ENCODE measurements at regions of chrX and their contacts with region 1.

Region 1: DNA sequence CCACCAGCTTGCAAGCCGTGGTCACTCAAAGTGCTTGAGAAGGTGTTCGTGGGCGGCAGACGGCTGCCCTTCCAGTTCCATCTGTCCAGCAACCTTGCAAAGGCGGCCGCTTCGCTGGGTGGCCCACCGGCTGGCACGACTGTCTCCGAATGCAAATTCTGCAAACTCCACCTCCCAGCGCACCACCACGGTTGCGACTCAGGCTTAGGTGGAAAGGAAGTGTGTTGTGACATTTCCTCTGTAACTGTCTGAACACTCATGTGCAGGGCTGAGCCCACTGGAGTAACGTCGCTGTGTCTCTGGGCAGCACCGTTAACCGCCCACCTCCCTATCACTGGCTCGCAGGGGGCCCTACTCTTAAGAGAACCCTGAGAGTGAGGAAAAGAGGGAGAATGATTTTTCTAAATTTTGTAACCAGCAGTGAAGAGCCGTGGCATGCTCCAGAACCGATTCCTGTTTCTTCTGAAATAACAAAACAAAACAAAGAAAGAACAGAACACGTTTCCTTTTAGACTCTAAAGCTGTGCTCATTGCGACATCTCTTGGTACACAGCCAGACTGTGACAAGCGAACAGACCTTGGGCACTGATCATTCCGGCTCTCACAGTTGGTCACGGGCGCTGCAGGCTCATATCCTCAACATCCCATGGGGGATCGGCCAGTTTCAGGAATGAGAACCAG is at the start of gene P2RY8:
- DNase-seq: peak; percentile 93
- H3K4me3 Mint-ChIP-seq: peak within 1 kb of the TSS; percentile 88
- H3K27ac Mint-ChIP-seq: peak within 1 kb of the TSS; percentile 98
- H3K4me1 Mint-ChIP-seq: peaks cover 15% of the 10 kb centered on the region
- H3K27me3 Mint-ChIP-seq: no peaks in the 10 kb centered on the region
- total RNA-seq, gene P2RY8: 19.1 and 19.5 TPM in 2 replicates

Region 2: GRCh38 chrX:1178580-1179057 is 358.6 kb before region 1 on chrX:
- intact Hi-C with region 1: no loop called
- DNase-seq: peak; percentile 71
- H3K4me3 Mint-ChIP-seq: no peak overlapping the region
- H3K27ac Mint-ChIP-seq: no peak overlapping the region
- H3K4me1 Mint-ChIP-seq: no peaks in the 10 kb centered on the region
- H3K27me3 Mint-ChIP-seq: no peaks in the 10 kb centered on the region

Region 3: GRCh38 chrX:1391707-1392375 is 145.3 kb before region 1 on chrX and contains the start of gene SLC25A6:
- intact Hi-C with region 1: loop called (anchors 10 kb)
- DNase-seq: peak; percentile 100
- H3K4me3 Mint-ChIP-seq: peak within 1 kb of the TSS; percentile 97
- H3K27ac Mint-ChIP-seq: peak within 1 kb of the TSS; percentile 98
- H3K4me1 Mint-ChIP-seq: peaks cover 36% of the 10 kb centered on the region
- H3K27me3 Mint-ChIP-seq: no peaks in the 10 kb centered on the region
- total RNA-seq, gene SLC25A6: 302 and 306 TPM in 2 replicates

Region 4: DNA sequence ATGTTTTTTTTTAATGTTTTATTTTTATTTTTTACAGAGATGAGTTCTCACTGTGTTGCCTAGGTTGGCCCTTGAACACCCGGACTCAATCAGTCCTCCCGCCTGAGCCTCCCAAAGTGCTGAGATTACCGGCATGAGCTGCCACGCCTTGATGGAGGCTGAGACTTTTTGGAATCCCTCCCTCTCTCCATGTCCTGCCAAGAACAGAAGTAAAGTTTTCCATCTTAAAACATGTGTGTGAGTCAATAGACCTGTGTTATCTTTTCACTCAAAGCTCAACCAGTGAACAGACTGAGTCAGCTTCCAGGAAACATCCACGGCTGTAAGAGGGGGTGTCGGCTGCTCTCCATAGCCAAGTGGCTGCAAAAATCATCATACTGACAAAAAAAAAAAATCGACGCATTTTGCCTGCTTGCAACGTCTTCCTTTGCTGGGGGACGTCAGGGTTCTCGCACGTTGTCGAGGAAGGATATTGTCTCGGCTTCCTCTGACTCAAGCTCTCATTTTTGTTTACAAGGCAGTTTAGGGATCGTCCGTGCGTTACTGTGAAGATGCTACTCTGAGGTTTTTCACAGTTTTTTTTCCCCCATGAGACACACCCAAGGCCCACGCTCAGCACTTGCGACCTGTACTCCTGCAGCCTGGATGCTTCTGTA is 74.5 kb before region 1 on chrX:
- intact Hi-C with region 1: loop called (anchors 1 kb)
- DNase-seq: peak; percentile 93
- H3K4me3 Mint-ChIP-seq: peak overlapping the region; percentile 83
- H3K27ac Mint-ChIP-seq: peak overlapping the region; percentile 87
- H3K4me1 Mint-ChIP-seq: peaks cover 47% of the 10 kb centered on the region
- H3K27me3 Mint-ChIP-seq: no peaks in the 10 kb centered on the region

Region 5: GRCh38 chrX:1481636-1482529 is 55.3 kb before region 1 on chrX:
- intact Hi-C with region 1: loop called (anchors 1 kb)
- DNase-seq: peak; percentile 94
- H3K4me3 Mint-ChIP-seq: peak overlapping the region; percentile 94
- H3K27ac Mint-ChIP-seq: peak overlapping the region; percentile 99
- H3K4me1 Mint-ChIP-seq: peaks cover 63% of the 10 kb centered on the region
- H3K27me3 Mint-ChIP-seq: no peaks in the 10 kb centered on the region

Region 6: DNA sequence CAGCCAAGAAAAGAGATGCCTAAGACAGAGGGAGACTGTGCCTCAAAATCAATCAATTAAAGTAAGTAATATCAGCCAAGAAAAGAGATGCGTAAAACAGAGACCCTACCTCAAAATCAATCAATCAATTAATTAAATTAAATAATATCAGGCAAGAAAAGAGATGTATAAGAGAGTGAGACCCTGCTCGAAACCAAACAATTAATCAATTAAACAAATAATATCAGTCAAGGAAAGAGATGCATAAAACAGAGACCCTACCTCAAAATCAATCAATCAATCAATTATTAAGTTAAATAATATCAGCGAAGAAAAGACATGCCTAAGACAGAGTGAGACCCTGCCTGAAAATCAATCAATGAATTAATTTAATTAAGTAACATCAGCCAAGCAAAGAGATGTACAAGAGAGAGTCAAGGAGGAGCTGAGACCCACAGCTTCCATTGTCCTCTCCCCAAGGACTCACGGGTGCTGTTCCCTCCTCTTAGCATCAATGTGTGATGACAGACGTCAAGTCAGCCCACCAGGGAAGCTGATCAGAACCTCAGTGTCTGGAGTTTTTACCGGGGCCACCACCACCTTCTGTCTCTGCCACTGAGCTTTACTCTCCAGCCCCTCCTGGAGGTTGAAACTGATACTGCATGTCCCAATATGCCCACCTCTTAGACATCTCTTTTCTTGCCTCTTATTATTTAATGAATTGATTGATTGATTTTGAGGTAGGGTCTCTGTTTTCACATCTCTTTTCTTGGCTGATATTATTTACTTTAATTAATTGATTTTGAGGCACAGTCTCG is 43.8 kb after region 1 on chrX:
- intact Hi-C with region 1: loop called (anchors 1 kb)
- DNase-seq: peak; percentile 94
- H3K4me3 Mint-ChIP-seq: no peak overlapping the region
- H3K27ac Mint-ChIP-seq: no peak overlapping the region
- H3K4me1 Mint-ChIP-seq: peaks cover 17% of the 10 kb centered on the region
- H3K27me3 Mint-ChIP-seq: no peaks in the 10 kb centered on the region

Region 7: GRCh38 chrX:1657367-1658070 is 120.3 kb after region 1 on chrX:
- intact Hi-C with region 1: loop called (anchors 2 kb)
- DNase-seq: peak; percentile 86
- H3K4me3 Mint-ChIP-seq: peak overlapping the region; percentile 93
- H3K27ac Mint-ChIP-seq: peak overlapping the region; percentile 95
- H3K4me1 Mint-ChIP-seq: peaks cover 28% of the 10 kb centered on the region
- H3K27me3 Mint-ChIP-seq: no peaks in the 10 kb centered on the region

Region 8: DNA sequence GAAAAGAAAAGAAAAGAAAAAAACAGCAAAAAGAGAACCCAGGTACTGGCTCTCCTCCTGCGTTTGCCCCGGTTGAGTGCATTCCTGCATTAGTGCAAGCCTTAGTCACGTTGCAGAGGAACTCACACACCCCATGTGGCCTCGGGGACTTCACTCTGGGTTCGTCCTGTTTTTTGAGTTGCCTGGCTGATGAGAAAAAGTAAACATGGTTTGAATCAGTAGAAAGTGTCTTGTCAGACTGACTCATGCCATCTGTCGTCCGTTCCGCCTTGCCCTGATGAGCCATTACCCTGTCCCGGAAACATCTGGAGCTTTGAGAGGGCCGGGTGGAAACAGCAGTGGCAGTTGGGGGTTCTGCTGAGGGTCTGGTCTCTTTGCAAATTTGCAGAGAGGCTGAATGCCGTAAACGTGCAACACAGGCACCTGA is 1170.2 kb after region 1 on chrX:
- intact Hi-C with region 1: loop called (anchors 2 kb)
- DNase-seq: peak; percentile 87
- H3K4me3 Mint-ChIP-seq: peak overlapping the region; percentile 66
- H3K27ac Mint-ChIP-seq: peak overlapping the region; percentile 98
- H3K4me1 Mint-ChIP-seq: peaks cover 84% of the 10 kb centered on the region
- H3K27me3 Mint-ChIP-seq: no peaks in the 10 kb centered on the region

Measured in activated CD4-positive, alpha-beta T cell treated with anti-CD3 and anti-CD28 coated beads, Interleukin-2, amount 10 ng/mL, durations not matched to agents 24 days and 14 days (primary cell).